Astrocyte of the cerebellum (primary cell): ENCODE measurements at regions of chrX and their contacts with region 1.

Region 1: DNA sequence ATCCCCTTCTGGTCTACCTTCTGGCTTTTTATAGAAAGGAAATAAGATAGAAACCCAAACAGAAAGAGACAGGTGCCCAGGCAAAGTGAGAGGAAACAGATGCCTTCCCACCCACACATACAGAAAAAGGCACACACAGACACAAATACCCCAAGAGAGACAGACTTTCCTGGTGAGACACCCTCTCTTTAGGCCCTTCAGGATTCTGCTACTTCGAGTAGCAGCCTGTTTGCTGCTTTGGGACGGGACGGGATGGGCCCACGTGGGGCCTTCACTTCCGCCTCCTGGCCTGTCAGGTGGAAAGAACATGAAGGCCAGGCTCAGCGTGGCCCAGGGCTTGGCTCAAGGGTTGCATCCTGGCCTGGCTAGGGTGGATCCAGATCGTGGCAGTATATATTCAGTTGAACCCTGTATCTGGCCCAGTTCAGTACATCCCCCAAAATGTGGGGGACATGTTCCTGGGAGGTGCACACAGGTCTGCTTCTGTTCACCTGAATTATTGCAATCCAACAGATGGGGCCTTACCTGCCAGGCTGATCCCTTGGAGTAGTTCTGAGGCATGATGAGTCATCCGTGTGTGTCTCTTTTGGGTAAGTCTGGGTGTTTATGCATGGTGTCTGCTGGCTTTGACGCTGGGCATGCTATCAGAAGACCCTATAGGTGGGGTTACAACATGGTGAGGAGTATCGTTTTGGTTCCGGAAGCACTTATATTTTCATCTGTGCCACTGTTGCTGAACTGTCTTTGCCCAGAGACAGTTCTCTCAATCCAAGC is 2.4 kb downstream of the ZNF275 start:
- DNase-seq: no peak
- H3K4me3 ChIP-seq: no peak overlapping the region
- CTCF ChIP-seq: no peak

Region 2: GRCh38 chrX:153387987-153388721 is 51.8 kb after region 1 on chrX:
- in situ Hi-C with region 1: loop called (anchors 5 kb)
- DNase-seq: no peak
- H3K4me3 ChIP-seq: no peak overlapping the region
- CTCF ChIP-seq: no peak

Region 3: DNA sequence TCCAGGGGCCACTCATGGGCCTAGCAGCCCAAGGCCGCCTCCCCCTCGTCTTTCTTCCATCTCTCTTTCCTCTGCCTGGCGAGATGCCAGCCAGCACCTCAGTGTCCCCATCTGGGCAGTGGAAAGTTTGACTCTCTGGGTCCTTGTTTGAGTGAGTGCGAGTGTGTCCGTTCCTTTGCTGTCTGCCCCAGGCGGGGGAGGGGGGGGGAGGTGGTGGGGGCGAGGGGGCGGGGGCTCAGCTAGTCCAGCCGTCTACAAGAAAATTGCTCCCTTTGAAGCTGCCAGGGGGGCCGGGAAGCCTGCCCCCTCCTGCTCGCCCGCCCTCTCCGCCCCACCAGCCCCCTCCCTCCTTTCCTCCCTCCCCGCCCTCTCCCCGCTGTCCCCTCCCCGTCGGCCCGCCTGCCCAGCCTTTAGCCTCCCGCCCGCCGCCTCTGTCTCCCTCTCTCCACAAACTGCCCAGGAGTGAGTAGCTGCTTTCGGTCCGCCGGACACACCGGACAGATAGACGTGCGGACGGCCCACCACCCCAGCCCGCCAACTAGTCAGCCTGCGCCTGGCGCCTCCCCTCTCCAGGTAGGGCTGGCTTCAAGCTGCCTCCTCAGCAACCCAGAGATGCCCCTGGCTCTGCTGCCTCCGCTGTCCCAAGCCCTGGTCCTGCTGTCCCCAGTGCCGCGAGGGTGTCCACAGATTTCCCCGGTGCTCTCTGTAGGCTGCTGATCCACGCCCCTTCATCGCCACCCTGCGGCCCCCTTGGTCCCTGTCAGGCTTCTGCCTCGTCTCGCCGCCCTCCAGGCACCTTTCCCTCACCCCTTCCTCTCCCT is 158.4 kb after region 1 on chrX and contains the start of gene BGN:
- in situ Hi-C with region 1: no loop called
- DNase-seq: no peak
- H3K4me3 ChIP-seq: peak within 1 kb of the TSS; percentile 51
- CTCF ChIP-seq: peak; percentile 42